ENCODE measurements at regions of chr3 and their contacts with region 1.

Region 1: DNA sequence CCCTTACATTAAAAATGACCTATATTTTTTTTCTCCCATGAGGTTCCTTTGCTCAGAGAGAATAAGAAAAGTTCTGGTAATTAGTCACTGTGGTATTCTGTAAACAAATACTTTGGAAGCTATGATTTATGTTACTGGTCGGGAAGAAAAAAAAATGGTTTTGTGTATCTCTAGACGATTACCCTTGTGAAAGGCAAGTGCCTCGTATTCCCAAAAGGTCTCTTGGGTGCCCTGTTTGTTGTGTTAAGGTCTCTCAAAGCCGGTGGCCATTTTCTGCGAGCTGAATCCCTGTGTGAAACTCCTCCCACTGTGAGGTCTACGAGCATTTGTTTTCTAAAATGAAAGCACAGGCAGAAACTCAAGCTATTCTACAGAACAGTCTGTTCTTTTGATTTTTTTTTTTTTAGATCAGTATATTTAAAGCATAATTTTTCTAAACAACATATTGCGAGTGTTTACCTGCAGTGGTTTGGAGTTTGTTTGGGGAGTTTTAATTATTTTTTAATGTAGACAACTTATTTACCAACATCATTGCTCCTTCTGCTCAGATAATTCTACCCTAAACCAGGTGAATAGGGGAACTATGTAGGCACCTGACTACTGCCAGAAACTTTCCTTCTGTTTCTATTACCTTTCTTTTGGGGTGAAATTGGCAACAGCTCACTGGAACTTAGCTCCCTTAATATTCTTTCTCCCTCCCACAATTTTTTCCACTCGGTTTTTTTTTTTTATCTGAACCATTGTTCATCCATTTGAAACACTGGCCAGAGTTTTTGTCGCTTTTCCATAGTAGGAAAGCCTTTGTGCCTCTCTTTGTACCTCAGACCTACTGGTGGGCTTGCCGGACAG is 44.0 kb downstream of the ZBTB38 start:
- DNase-seq: peak; percentile 73
- H3K4me3 Mint-ChIP-seq: peak overlapping the region; percentile 72
- H3K27ac Mint-ChIP-seq: peak overlapping the region; percentile 97
- H3K4me1 Mint-ChIP-seq: peaks cover 72% of the 10 kb centered on the region
- H3K27me3 Mint-ChIP-seq: no peaks in the 10 kb centered on the region

Region 2: GRCh38 chr3:141426404-141427034 is 14.2 kb after region 1 on chr3:
- CTCF ChIA-PET with region 1: interaction called, 5 read pairs
- intact Hi-C with region 1: loop called (anchors 1 kb)
- DNase-seq: no peak
- H3K4me3 Mint-ChIP-seq: no peak overlapping the region
- H3K27ac Mint-ChIP-seq: no peak overlapping the region
- H3K4me1 Mint-ChIP-seq: peaks cover 11% of the 10 kb centered on the region
- H3K27me3 Mint-ChIP-seq: no peaks in the 10 kb centered on the region

Region 3: GRCh38 chr3:141452036-141452435 is 39.7 kb after region 1 on chr3:
- CTCF ChIA-PET with region 1: interaction called, 12 read pairs
- intact Hi-C with region 1: no loop called
- DNase-seq: peak; percentile 75
- H3K4me3 Mint-ChIP-seq: no peak overlapping the region
- H3K27ac Mint-ChIP-seq: no peak overlapping the region
- H3K4me1 Mint-ChIP-seq: peaks cover 20% of the 10 kb centered on the region
- H3K27me3 Mint-ChIP-seq: no peaks in the 10 kb centered on the region

Region 4: DNA sequence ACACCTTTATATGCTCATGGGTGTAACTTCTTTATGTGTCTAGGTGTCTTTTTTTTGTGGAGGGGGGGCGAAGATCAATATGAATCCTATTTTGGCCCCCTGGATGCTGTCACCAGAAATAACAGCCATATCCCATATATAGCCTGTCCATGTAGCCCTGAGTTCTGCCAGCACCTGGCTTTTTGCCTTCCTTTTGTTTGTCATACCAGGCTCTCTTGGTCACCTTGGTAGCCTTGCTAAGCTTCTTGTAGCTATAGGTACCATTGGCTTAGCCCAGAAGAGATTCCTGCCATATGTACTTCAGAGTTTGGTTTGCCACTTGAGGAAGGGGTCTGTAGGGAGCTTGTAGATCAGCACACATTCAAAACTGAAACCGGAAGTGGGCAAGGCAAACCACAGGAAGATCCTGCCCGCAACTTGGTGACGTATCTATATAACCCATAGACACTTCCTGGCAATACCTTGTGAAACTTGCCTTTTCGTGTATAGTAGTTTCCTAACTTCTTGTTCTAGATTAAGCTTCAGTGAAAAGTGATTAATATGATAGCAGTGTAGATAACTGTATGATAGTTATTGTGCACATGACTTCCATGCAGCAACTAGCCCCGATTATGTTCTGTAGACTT is 86.4 kb after region 1 on chr3:
- CTCF ChIA-PET with region 1: interaction called, 3 read pairs
- intact Hi-C with region 1: loop called (anchors 1 kb)
- DNase-seq: peak; percentile 94
- H3K4me3 Mint-ChIP-seq: peak overlapping the region; percentile 48
- H3K27ac Mint-ChIP-seq: peak overlapping the region; percentile 94
- H3K4me1 Mint-ChIP-seq: peaks cover 75% of the 10 kb centered on the region
- H3K27me3 Mint-ChIP-seq: no peaks in the 10 kb centered on the region

Region 5: DNA sequence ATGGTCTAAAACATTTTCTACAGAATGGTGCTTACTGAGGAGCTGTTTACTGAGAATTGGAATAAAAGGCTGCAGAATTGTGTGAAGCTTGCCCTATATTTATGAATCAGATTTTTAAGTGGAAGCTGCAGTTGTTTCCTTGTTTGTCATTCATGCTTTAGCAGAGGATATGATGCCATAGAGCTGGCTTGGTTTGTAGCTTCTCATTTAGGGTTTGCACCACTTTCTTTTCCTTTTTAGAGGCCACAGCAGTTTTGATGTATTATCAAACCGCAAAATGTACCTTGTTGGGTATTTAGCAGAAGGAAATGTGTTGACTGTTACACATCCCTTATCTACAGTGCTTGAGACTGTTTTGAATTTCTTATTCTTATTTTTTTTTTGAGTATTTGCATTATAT is 140.7 kb after region 1 on chr3:
- CTCF ChIA-PET with region 1: no interaction called
- intact Hi-C with region 1: loop called (anchors 1 kb)
- DNase-seq: peak; percentile 21
- H3K4me3 Mint-ChIP-seq: no peak overlapping the region
- H3K27ac Mint-ChIP-seq: peak overlapping the region; percentile 60
- H3K4me1 Mint-ChIP-seq: peaks cover 55% of the 10 kb centered on the region
- H3K27me3 Mint-ChIP-seq: no peaks in the 10 kb centered on the region

Measured in activated naive CD4-positive, alpha-beta T cell treated with anti-CD3 and anti-CD28 coated beads for 36 hours (primary cell).